Activated CD4-positive, alpha-beta memory T cell treated with anti-CD3 and anti-CD28 coated beads for 36 hours (primary cell): ENCODE measurements at regions of chr19 and their contacts with region 1.

Region 1: DNA sequence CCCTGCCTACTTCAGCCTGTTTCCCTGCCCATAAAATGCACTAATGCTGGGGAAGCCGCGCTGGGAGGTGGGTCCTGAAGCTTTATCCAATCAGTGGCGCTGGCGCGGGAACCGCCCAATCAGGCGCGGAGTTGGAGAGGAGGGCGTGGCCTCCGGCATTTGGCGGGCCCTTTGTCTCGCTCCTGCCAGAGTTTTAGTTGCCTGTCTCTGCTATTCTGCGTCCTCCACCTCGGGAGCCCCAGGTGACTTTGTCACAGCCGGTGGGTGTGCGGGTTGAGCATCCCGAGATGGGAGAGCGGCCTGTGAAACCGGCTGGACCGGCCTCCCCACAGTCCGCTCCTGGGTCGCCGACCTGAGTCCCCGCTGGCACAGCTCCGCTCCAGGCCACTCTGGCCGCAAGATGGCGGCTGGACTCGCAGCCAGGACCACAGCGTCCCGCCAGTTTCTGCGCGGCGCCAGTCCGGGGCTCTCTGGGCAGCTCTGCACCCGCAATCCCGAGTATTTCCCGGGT is 30.7 kb upstream of the ZNF429 start:
- DNase-seq: peak; percentile 94
- H3K4me3 Mint-ChIP-seq: peak overlapping the region; percentile 79
- H3K27ac Mint-ChIP-seq: no peak overlapping the region
- H3K4me1 Mint-ChIP-seq: peaks cover 4% of the 10 kb centered on the region
- H3K27me3 Mint-ChIP-seq: no peaks in the 10 kb centered on the region

Region 2: DNA sequence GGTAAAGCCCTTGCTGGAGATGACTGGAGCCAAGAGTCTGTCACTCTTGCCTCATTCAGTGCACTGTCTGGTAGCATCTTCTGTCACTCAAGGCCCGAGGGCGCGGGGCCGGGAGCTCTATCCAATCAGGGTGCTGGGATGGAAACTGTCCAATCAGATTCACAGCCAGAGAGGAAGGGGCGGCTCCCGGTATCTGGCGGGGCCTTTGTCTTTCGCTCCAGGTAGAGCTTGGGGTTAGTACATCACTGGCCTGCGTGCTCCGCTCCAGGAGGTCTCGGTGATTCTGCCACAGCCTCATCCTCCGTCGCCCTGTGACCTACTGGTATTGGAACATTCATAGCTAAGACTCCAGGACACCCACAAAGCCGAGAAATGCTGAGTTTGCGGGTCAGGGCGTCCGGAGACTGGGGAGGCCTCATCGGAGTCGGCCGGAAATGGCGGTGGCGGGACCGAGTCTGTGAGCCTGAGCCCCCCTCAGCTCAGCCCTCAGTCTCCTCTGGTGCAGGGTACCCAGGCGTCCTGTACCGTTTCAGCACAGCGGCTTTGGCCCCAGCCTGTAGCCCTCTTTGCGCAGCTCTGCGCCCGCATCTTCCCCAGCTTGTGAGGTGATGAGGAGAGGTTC is 474.9 kb before region 1 on chr19:
- CTCF ChIA-PET with region 1: no interaction called
- POLR2A ChIA-PET with region 1: no interaction called
- intact Hi-C with region 1: loop called (anchors 10 kb)
- DNase-seq: peak; percentile 95
- H3K4me3 Mint-ChIP-seq: peak overlapping the region; percentile 97
- H3K27ac Mint-ChIP-seq: peak overlapping the region; percentile 84
- H3K4me1 Mint-ChIP-seq: peaks cover 9% of the 10 kb centered on the region
- H3K27me3 Mint-ChIP-seq: no peaks in the 10 kb centered on the region

Region 3: DNA sequence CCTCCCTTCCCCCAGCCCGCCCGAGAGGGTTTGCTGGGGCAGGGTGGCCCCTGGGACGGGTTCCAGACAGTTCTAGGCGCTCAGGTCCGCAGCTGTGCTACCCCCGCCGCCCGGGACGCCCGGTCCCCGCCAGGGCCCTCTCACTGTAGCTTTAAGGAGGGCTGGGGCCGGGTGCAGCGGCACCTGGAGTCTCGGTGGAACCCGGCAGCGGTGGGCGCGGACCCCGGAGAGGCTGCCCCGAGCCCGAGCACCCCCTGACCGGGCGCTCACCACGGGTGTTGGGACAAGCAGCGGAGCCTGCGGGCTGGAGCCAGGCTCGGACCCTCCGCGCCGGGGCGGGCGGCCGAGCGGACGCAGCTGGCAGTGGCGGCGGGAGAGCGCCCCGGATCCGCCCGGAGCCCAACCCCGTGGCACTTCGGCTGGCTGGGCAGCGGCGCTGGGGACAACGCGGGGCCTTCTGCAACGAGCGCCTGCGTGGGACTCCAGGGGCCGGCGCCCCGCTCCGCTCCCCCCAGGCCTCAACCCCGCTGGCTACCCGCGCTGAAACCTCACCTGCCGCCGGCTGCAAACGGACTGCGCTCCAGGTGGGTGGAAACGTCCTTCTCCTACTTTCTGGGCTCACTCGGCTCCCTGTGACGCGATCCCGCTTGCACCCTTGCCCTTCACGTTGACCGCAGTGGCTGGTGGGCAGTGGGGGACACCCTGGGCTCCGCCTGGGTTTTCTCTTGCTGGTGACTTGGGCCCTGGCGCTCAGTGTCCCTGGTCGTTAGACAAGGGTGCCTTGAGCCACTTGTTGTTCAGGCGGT is 111.8 kb after region 1 on chr19:
- CTCF ChIA-PET with region 1: no interaction called
- POLR2A ChIA-PET with region 1: no interaction called
- intact Hi-C with region 1: no loop called
- DNase-seq: peak; percentile 15
- H3K4me3 Mint-ChIP-seq: peak overlapping the region; percentile 63
- H3K27ac Mint-ChIP-seq: no peak overlapping the region
- H3K4me1 Mint-ChIP-seq: peaks cover 4% of the 10 kb centered on the region
- H3K27me3 Mint-ChIP-seq: peaks cover 8% of the 10 kb centered on the region